Right ventricle myocardium inferior (tissue), 1 donor: ENCODE measurements at regions of chr1 and their contacts with region 1.

Region 1: DNA sequence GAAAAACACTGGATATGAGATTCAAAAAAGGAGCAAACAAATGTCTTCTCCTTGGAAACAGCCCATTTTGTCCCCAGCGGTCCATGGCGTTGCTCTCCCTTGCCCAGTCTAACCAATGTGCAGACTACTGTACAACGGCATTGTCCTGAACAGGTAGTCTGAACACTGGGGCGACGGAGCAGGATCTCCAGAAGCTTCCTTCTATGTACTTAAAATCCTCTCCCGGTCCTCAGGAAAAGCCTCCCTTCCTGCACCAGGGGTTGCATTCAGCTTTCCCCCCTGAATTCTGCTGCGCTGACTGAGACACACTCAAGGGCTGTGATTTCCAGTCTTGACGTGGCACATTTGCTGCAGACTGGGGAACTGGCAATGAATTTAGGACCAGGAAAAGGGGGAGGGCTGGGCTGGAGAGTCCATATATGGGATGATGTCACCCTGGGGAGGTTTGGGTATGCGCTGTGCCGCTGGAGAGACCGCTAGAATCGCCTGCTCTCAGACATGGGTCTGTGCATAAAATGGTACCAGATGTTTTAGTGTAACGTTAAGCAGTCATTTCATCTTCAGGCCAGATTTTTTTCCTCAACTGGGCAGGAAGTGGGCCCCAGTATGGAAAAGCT is 275.9 kb upstream of the C1orf105 start:
- DNase-seq: peak; percentile 78
- ATAC-seq: peak; percentile 98

Region 2: GRCh38 chr1:172002725-172003345 is 141.7 kb before region 1 on chr1:
- intact Hi-C with region 1: loop called (anchors 10 kb)
- DNase-seq: no peak
- ATAC-seq: no peak

Region 3: GRCh38 chr1:172180501-172181285 is 36.1 kb after region 1 on chr1:
- intact Hi-C with region 1: loop called (anchors 2 kb)
- DNase-seq: peak; percentile 72
- ATAC-seq: peak; percentile 84